ENCODE measurements at regions of chr3 and their contacts with region 1.

Region 1: GRCh38 chr3:135503760-135504686 is 461.5 kb upstream of the PPP2R3A start:
- DNase-seq: peak; percentile 49
- CTCF ChIP-seq: peak; percentile 59

Region 2: GRCh38 chr3:134794950-134795745 is 708.9 kb before region 1 on chr3 and contains the start of gene EPHB1:
- CTCF ChIA-PET with region 1: interaction called, 12 read pairs
- POLR2A ChIA-PET with region 1: no interaction called
- DNase-seq: peak; percentile 85
- CTCF ChIP-seq: peak; percentile 82

Region 3: DNA sequence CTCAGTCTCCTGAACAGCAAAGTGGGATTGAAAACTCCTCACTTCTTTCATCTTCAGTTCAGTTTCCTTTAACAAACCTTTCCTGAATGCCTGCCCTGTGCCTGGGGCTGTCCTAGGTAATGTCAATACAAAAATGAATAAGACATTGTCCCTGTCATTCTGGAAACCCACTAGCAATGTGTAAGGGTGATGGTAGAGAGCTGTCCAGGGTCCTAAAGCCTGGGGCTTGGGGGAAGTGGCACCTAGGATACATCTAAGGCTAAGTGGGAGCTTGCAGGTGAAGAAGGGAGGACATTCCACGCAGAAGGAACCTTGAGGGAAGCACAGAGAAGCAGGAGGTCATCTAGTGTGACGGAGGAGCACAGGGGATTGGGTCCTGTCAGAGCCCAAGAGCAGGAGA is 248.8 kb after region 1 on chr3:
- CTCF ChIA-PET with region 1: no interaction called
- POLR2A ChIA-PET with region 1: no interaction called
- DNase-seq: no peak
- CTCF ChIP-seq: no peak

Measured in GM10248 (cell line).